Activated CD4-positive, alpha-beta T cell treated with anti-CD3 and anti-CD28 coated beads for 36 hours (primary cell): ENCODE measurements at regions of chrX and their contacts with region 1.

Region 1: DNA sequence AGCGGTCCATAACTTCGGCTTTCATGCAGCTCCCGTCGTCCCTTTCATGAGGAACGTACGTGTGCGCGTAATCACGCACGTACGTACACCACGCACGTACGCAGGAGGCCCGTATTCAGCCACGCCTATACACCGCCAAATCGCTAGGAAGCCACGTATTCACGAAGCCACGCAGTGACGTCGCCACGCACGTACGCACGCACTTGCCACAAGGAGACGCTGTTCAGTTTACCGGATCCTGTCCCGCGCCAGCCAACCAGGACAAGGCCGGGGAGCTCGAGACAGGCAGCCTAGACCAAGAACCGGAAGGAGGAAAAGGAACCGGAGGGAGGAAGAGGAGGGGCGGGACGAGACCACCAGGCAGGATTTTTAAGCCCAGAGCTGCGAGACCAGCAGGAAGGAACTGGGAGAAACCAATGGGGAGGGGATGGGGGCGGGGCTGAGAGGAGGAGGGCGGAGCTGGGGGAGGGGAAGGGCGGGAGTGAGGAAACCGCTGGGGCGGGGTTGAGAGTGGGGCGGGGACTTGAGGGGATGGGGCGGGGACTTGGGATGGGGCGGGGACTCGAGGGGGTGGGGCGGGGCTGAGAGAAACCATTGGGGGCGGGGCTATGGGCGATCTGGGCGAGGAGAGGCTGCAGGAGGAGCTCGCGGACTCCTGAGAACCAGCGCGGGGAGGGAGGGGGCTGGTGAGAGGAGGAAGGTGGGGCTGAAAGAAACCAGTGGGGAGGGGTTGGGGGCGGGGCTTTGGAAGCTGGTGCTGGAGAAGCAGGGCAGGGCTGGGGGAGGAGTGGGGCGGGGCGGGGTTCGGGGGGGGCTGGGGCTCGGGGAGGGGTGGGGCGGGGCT is at the start of gene EOLA2:
- DNase-seq: peak; percentile 94
- ATAC-seq: peak; percentile 58
- H3K4me3 Mint-ChIP-seq: peak within 1 kb of the TSS; percentile 82
- H3K27ac Mint-ChIP-seq: peak within 1 kb of the TSS; percentile 98
- H3K4me1 Mint-ChIP-seq: peaks cover 3% of the 10 kb centered on the region
- H3K27me3 Mint-ChIP-seq: no peaks in the 10 kb centered on the region
- total RNA-seq, gene EOLA2: 11.5 to 27.7 TPM

Region 2: DNA sequence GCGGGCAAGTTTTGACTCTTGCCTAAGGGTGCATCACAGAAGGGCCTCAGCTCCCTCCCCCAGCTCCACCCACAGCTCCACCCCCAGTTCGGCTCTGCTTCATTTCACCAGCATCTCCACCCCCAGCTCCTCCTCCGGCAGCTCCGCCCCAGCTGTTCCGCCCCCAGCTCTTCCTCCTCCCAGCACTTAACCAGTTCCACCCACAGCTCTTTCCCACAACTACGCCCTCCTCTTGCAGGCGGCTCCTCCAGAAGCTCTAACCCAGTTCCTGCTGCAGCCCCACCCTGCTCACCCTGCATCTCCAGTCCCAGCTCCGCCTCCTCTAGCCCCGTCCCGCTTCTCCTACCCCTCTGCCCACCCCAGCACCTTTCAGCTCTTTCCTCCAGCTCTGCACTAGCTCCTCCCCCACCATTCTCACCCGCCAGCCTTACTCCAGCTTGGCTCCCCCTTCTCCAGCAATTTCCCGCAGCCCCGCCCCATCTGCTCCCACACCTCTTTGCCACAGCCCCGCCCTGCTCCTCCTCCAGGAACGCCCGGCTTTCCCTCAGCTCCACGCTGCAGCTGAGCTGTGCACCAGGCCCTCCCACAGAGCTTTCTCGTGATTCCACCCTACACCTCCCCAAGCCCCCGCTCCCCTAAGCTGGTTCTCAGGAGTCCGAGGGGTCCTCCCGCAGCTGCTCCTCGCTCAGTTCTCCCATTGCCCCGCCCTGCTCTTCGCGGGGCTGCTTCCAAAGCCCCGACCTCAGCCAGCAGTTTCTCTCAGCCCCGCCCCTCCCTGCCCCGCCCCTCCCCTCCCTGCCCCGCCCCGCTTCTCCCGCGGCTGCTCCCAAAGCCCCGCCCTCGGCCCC is 399.1 kb before region 1 on chrX:
- CTCF ChIA-PET with region 1: interaction called, 3 read pairs
- POLR2A ChIA-PET with region 1: interaction called, 30 read pairs
- intact Hi-C with region 1: no loop called
- DNase-seq: peak; percentile 91
- ATAC-seq: peak; percentile 46
- H3K4me3 Mint-ChIP-seq: peak overlapping the region; percentile 82
- H3K27ac Mint-ChIP-seq: peak overlapping the region; percentile 82
- H3K4me1 Mint-ChIP-seq: peaks cover 9% of the 10 kb centered on the region
- H3K27me3 Mint-ChIP-seq: no peaks in the 10 kb centered on the region

Region 3: DNA sequence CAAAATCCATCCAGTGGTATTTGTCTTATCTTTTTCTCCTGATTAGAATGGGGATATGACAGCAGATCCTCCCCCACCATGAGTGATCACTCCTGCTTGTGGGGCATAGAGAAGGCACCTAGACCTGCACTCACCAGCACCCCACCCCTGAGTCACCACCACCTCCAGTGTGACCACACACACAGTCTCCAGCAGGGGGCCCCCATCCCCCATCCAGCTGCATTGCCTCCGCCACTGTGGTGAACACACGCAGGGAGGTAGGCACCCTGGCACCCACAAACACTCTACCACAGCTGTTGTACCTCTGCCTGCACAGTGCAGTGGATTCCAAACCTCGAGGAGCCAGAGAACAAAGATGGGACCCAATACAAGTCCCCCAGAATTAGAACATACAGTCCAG is 66.7 kb before region 1 on chrX:
- CTCF ChIA-PET with region 1: no interaction called
- POLR2A ChIA-PET with region 1: no interaction called
- intact Hi-C with region 1: loop called in 1 of 2 experiments (anchors 2 kb)
- DNase-seq: peak; percentile 82
- ATAC-seq: peak; percentile 99
- H3K4me3 Mint-ChIP-seq: no peak overlapping the region
- H3K27ac Mint-ChIP-seq: no peak overlapping the region
- H3K4me1 Mint-ChIP-seq: peaks cover 4% of the 10 kb centered on the region
- H3K27me3 Mint-ChIP-seq: peaks cover 3% of the 10 kb centered on the region

Region 4: DNA sequence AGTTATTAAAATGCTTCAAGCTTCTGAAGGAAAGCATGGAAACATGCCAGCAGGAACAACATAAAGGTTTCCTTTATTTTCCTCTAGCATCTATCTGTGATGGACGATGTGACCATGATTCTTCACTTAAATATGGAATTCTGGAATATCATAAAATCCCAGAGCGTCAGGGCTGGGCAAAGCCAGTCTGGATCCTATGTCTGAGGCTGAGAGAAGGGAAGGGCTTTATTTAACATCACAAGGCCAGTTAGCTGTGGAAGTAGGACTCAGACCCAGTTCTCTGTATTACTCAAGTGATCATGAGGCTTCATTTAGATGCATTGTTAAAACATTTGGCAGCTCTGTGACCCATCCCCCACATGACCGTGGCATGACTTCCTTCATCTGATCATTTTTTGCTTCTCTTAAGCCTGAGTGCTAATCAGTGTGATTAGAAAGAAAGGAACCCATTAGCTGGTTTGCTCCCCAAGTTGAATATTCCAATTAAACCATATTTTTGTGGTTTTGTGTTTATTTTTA is 40.5 kb after region 1 on chrX:
- CTCF ChIA-PET with region 1: no interaction called
- POLR2A ChIA-PET with region 1: no interaction called
- intact Hi-C with region 1: no loop called
- DNase-seq: no peak
- ATAC-seq: no peak
- H3K4me3 Mint-ChIP-seq: no peak overlapping the region
- H3K27ac Mint-ChIP-seq: no peak overlapping the region
- H3K4me1 Mint-ChIP-seq: no peaks in the 10 kb centered on the region
- H3K27me3 Mint-ChIP-seq: no peaks in the 10 kb centered on the region